ENCODE measurements at regions of chr9 and their contacts with region 1.

Region 1: GRCh38 chr9:6106576-6107339 is 91.3 kb upstream of the RANBP6 start:
- DNase-seq: no peak
- ATAC-seq: peak; percentile 87 to 99 (median 92)
- H3K4me3 ChIP-seq: peak overlapping the region; percentile 46
- H3K27ac ChIP-seq: peak overlapping the region; percentile 73
- H3K4me1 ChIP-seq: peaks cover 10% of the 10 kb centered on the region
- H3K27me3 ChIP-seq: no peaks in the 10 kb centered on the region
- CTCF ChIP-seq: peak; percentile 48

Region 2: DNA sequence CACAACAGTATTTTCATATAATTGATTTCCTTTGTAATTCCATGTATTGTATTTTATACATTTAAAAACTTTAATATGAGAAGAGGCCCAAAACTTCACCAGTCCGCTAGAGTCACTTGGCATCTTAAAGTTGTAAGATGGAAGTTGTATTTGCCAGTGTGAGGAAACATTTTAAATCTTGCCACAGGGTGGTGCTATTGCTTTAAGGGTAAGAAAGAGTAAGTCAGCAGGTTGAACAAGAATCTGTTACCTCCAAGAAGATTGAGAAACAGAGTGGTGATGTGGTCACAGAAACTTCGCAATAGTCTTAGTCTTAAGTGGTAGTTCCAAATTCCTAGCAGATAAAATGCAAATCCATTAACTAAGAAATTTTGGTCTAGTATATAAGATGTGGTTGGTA is 51.5 kb before region 1 on chr9:
- intact Hi-C with region 1: loop called in 1 of 2 experiments (anchors 5 kb)
- DNase-seq: no peak
- ATAC-seq: peak; percentile 81 to 99 (median 88)
- H3K4me3 ChIP-seq: no peak overlapping the region
- H3K27ac ChIP-seq: no peak overlapping the region
- H3K4me1 ChIP-seq: no peaks in the 10 kb centered on the region
- H3K27me3 ChIP-seq: no peaks in the 10 kb centered on the region
- CTCF ChIP-seq: peak; percentile 68